ENCODE measurements at regions of chr12 and their contacts with region 1.

Region 1: DNA sequence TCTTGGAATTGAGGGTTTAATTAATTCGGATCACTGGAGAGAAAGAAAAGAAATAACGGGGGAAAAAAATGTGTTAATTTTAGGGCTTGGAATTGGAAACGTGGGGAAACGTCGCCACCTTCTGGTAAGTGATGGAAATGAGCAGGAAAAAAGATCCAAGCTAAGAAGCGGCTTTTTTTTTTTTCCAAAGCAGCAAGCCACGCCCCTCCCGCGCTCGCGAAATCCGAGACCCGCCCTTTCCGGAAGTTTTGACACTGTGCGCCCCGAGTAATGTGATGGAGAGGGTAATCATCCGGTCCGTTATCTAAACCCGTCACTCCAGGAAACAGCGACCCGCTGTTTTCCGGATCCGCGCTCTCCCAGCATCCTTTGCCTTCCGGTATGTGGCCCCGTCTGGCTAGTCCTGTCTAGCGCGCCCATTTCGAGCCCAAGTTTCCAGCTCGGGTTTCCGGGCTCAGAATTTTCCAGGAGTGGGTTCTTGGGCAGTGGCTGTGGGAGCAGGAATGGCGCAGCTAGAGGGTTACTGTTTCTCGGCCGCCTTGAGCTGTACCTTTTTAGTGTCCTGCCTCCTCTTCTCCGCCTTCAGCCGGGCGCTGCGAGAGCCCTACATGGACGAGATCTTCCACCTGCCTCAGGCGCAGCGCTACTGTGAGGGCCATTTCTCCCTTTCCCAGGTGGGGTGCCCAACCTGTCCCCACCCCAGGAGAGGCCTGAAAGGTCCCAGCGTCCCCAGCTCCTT is at the start of gene ALG10B:
- DNase-seq: peak; percentile 87 to 99 (median 92)

Region 2: GRCh38 chr12:38138225-38139221 is 178.0 kb before region 1 on chr12:
- intact Hi-C with region 1: loop called (anchors 1 kb)
- DNase-seq: peak in 8 of 10 donors; percentile 54 to 88 (median 80)

Region 3: DNA sequence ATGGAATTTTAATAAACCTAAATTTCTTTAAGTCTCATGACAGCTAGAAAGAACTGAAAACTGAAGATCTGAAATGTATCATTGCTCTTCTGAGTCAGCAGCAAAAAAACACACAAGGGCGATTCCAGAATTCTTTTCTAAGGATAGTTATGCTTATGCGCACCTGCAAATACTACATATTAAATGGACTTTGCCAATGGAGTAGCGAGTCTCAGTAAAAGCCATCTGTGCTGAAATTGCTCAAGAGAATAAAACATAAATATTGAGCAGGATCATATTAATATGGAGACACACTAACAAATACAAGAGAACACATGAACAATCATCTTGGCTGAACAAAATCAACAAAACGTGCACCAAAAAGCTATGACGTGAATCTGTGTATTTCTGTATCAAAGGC is 515.2 kb after region 1 on chr12:
- intact Hi-C with region 1: no loop called
- DNase-seq: no peak